ENCODE measurements at regions of chr4 and their contacts with region 1.

Region 1: DNA sequence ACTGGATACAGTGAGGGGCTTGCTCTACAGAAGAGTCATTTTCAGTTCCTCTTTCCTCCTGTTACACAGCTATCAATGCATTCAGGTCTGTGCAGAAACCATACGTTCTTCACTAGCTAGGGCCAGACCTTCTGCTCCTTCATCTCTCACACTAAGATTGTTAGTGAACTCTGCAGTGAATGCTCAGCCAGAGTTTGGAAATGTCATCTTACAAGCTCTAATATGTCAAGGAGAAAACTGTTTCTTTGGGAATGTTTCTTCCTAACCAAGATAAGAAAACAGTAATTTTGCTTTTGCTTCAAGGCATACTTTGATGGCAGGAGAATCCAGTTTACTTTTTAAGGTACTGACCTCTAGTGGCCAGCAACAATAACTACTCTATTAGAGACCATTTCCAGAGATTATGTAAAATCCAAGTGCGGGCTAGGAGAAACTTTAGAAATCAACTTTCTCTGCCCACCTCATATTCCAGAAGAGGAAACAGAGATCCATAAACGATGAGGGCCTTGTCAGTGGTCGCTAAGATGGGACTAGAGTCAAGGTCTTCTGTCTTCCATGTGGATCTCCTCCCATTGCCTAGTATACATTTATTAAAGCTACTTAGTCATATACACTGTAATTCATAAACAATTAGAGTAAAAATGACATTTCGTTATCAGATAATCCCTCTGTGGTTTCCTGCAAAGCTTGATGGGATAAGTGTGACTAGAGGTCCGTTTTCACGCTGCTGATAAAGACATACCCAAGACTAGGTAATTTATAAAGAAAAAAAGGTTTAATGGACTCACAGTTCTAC is 12.1 kb upstream of the CC2D2A start:
- DNase-seq: peak in 1 of 2 experiments; percentile 14
- H3K4me3 ChIP-seq: no peak overlapping the region
- H3K4me3 Mint-ChIP-seq: no peak overlapping the region
- H3K27ac Mint-ChIP-seq: no peak overlapping the region
- H3K4me1 ChIP-seq: no peaks in the 10 kb centered on the region; the same call in 1 of the 2 replicates
- H3K4me1 Mint-ChIP-seq: no peaks in the 10 kb centered on the region
- H3K27me3 ChIP-seq: no peaks in the 10 kb centered on the region; the same call in 1 of the 2 replicates
- H3K27me3 Mint-ChIP-seq: peaks cover 9% of the 10 kb centered on the region
- CTCF ChIP-seq: peak in 1 of 2 experiments; percentile 64

Region 2: DNA sequence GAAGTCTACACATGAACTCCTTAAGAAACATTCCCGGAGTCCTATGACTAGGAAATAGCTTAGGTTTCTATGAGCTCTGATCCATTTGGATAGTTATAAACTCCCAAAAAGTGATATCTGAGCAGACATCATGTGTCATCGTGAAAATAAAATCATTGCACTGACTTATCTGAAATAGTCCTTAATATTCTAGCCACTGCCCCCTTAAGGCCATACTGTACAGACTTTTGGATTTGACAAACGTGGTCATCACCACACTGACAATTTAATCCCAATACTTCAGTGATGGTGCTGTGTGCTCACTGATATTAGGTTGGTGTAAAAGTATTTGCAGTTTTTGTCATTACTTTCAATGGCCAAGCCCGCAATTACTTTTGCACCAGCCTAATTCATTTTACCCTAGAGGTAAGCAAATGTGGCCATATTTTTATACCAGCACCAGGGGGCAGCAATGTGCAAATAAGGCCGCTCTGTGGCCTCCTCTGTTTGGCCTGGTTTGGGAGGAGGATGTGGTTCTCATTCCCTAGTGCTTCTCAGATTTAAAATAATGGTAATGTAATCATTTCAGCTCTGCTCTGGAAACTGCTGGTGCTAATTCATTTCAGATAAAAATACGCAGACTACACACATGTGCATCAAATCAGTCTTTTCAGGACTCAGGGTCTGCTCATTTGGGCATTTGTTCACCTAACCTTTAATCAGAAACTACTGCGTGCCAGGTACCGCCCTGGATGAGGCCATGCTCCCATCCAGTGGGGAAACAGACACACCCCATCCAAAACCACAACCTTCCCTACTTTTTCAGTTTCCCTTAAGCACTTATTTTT is 226.1 kb before region 1 on chr4:
- CTCF ChIA-PET with region 1: no interaction called
- POLR2A ChIA-PET with region 1: no interaction called
- intact Hi-C with region 1: loop called (anchors 1 kb)
- DNase-seq: peak; percentile 67 to 74
- H3K4me3 ChIP-seq: no peak overlapping the region
- H3K4me3 Mint-ChIP-seq: no peak overlapping the region
- H3K27ac Mint-ChIP-seq: no peak overlapping the region
- H3K4me1 ChIP-seq: no peaks in the 10 kb centered on the region
- H3K4me1 Mint-ChIP-seq: no peaks in the 10 kb centered on the region
- H3K27me3 ChIP-seq: no peaks in the 10 kb centered on the region
- H3K27me3 Mint-ChIP-seq: peaks cover 5% of the 10 kb centered on the region
- CTCF ChIP-seq: peak; percentile 46 to 52

Region 3: DNA sequence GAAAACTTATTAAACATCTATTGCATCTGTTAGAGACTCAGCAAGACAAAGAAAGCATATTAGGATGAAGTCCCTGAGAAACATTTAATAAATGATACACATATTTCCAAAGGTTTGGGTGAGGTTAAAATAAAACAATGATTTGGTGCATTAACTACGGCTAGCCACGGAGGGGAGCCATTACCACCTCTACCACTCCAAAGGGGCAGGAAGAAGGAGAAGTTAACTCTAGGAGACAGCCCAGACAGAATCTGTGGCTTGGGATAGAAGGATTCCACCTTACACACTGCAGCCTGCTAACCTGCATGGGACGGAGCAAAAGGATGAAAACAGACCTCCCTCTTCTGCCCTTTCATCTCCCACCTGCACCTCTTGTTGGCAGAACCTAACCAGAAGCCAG is 218.9 kb before region 1 on chr4:
- CTCF ChIA-PET with region 1: no interaction called
- POLR2A ChIA-PET with region 1: no interaction called
- intact Hi-C with region 1: loop called (anchors 1 kb)
- DNase-seq: peak in 1 of 2 experiments; percentile 34
- H3K4me3 ChIP-seq: no peak overlapping the region
- H3K4me3 Mint-ChIP-seq: no peak overlapping the region
- H3K27ac Mint-ChIP-seq: no peak overlapping the region
- H3K4me1 ChIP-seq: no peaks in the 10 kb centered on the region
- H3K4me1 Mint-ChIP-seq: peaks cover 6% of the 10 kb centered on the region
- H3K27me3 ChIP-seq: no peaks in the 10 kb centered on the region
- H3K27me3 Mint-ChIP-seq: peaks cover 9% of the 10 kb centered on the region
- CTCF ChIP-seq: peak; percentile 32 to 34

Region 4: DNA sequence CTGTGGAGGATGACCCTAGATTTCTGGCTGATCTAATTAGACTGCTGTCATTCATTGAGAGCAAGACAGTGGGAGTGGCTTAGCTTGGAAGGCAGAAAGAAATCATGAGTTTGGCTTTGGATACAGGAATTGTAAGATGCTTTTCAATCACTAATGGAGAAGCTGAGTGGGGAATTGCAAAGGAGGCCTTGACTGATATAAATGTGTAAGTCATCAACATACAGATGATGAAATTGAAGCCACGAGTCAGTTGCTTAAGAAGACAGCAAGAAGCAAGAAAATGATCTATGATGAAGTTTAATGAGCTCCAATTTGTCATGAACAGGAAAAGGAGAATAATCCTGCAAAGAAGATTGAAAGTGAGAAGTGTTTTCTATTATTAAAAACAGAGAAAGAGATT is 166.5 kb before region 1 on chr4:
- CTCF ChIA-PET with region 1: no interaction called
- POLR2A ChIA-PET with region 1: no interaction called
- intact Hi-C with region 1: no loop called
- DNase-seq: no peak
- H3K4me3 ChIP-seq: no peak overlapping the region
- H3K4me3 Mint-ChIP-seq: no peak overlapping the region
- H3K27ac Mint-ChIP-seq: no peak overlapping the region
- H3K4me1 ChIP-seq: no peaks in the 10 kb centered on the region
- H3K4me1 Mint-ChIP-seq: no peaks in the 10 kb centered on the region
- H3K27me3 ChIP-seq: no peaks in the 10 kb centered on the region
- H3K27me3 Mint-ChIP-seq: no peaks in the 10 kb centered on the region
- CTCF ChIP-seq: no peak

Region 5: DNA sequence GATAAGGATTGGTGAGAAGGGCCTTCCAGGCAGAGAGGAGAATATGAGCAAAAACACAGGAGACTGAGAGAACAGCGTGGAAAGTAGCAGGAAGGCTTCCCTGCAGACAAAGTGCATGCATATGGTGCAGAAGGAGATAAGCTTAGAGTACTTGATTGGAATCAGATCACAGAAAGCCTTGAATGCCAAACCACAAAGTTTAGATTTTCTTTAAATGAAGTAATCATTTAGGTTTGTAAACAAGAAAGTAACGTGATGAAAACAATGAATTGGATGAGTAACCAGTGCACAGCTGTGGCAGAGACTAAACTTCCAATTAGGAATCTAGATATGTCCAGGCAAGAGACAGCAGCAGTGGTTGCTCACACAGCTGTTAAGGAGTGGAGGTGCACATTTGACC is 113.6 kb before region 1 on chr4:
- CTCF ChIA-PET with region 1: no interaction called
- POLR2A ChIA-PET with region 1: no interaction called
- intact Hi-C with region 1: loop called (anchors 10 kb)
- DNase-seq: no peak
- H3K4me3 ChIP-seq: no peak overlapping the region
- H3K4me3 Mint-ChIP-seq: no peak overlapping the region
- H3K27ac Mint-ChIP-seq: no peak overlapping the region
- H3K4me1 ChIP-seq: peaks cover 18% of the 10 kb centered on the region
- H3K4me1 Mint-ChIP-seq: peaks cover 10% of the 10 kb centered on the region
- H3K27me3 ChIP-seq: no peaks in the 10 kb centered on the region
- H3K27me3 Mint-ChIP-seq: peaks cover 4% of the 10 kb centered on the region
- CTCF ChIP-seq: no peak

Region 6: DNA sequence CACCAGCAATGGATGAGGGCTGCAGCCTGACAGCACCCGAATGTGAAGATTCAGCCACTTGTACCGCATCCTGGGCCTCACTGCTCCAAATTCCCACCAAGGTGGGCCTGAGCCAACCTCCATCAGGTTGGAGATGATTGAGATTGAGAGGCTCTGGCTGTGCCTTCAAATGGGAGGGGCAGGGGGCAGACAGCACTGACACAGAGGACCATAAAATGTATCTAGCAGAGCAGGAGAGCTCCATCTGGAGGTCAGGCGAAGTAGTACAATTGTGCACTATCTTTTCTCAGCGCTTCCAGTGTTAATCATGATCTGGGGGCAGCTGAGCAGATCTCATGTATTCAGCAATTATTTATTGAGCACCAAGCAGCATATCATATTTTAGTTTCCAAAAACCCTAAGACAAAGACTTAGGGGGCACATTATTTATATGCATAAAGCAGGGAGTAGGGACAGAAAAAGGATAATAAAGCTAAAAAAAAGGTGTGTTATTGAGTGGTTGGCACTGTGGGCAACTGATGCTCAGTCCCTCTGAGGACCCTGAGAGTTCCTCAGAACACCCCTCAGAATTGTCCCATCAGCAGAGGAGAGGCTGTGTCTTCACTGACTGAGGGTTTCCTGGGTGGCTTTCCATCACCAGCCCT is 61.3 kb before region 1 on chr4:
- CTCF ChIA-PET with region 1: no interaction called
- POLR2A ChIA-PET with region 1: no interaction called
- intact Hi-C with region 1: loop called (anchors 1 kb)
- DNase-seq: peak; percentile 54 to 62
- H3K4me3 ChIP-seq: no peak overlapping the region
- H3K4me3 Mint-ChIP-seq: no peak overlapping the region
- H3K27ac Mint-ChIP-seq: no peak overlapping the region
- H3K4me1 ChIP-seq: no peaks in the 10 kb centered on the region
- H3K4me1 Mint-ChIP-seq: peaks cover 6% of the 10 kb centered on the region
- H3K27me3 ChIP-seq: no peaks in the 10 kb centered on the region
- H3K27me3 Mint-ChIP-seq: peaks cover 4% of the 10 kb centered on the region
- CTCF ChIP-seq: peak; percentile 68 to 69

Region 7: DNA sequence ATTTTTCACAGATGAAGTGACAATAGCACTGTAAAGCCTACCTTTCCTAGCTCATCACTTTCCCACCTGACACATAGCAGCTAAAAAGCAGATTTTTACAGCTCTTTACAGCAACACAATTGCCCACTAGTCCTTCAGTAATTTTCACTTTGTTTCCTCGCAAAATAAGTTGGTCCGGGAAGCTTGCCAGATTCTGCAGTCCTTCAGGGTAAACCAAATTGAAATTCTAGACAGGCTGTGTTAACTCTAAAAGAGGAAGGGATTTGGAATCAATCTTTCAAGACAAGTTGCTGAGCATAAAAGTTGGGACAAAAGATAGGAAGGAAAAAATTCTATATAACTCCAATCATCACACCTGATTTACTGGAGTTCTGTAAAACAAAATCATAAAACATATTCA is 21.1 kb before region 1 on chr4:
- CTCF ChIA-PET with region 1: no interaction called
- POLR2A ChIA-PET with region 1: no interaction called
- intact Hi-C with region 1: no loop called
- DNase-seq: no peak
- H3K4me3 ChIP-seq: no peak overlapping the region
- H3K4me3 Mint-ChIP-seq: no peak overlapping the region
- H3K27ac Mint-ChIP-seq: no peak overlapping the region
- H3K4me1 ChIP-seq: no peaks in the 10 kb centered on the region
- H3K4me1 Mint-ChIP-seq: no peaks in the 10 kb centered on the region
- H3K27me3 ChIP-seq: no peaks in the 10 kb centered on the region
- H3K27me3 Mint-ChIP-seq: peaks cover 13% of the 10 kb centered on the region
- CTCF ChIP-seq: no peak

Region 8: DNA sequence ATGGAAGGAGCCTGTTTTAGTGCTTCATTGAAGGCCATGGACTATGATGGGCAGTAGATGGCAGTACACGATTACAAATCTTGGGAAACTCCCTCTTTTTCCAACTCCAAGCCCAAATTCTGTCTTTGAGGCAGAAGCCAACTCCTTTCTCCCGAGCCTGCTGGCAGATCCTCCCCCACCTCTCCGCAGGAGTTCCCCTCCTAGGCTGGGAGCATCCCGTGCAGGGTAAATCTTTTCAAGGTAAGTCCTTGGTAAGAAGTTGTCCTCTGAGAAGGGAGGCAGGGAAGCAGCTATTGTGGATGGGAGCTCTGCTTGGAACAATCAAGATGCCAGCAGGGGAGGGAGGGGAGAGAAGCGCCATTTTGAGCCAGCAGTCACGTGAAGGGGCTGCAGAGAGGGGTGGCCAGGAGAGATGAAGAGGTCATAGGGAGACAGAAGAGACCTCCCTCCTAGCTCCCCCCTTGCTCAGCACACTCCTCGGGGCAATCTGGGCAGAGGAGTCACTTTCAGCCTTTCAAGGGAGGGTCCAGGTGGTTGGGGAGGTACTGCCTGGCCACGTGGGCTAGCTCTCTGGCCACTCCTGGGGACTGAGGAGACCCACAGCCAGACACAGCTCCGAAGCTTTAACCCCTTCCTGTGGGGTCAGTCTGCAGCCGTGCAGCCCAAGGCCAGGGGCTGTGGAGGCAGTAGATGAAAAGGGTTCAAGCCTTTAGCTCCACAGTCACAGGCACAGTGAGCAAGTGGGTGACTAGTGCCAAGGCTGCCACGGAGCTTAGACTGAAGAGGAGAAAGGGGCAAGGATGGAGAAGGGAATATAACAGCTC is 21.7 kb after region 1 on chr4:
- CTCF ChIA-PET with region 1: no interaction called
- POLR2A ChIA-PET with region 1: no interaction called
- intact Hi-C with region 1: no loop called
- DNase-seq: peak; percentile 81 to 82
- H3K4me3 ChIP-seq: peak overlapping the region; percentile 37
- H3K4me3 Mint-ChIP-seq: peak overlapping the region; percentile 97
- H3K27ac Mint-ChIP-seq: peak overlapping the region; percentile 96
- H3K4me1 ChIP-seq: no peaks in the 10 kb centered on the region
- H3K4me1 Mint-ChIP-seq: peaks cover 7% of the 10 kb centered on the region
- H3K27me3 ChIP-seq: no peaks in the 10 kb centered on the region
- H3K27me3 Mint-ChIP-seq: no peaks in the 10 kb centered on the region
- CTCF ChIP-seq: peak; percentile 50 to 60

Region 9: DNA sequence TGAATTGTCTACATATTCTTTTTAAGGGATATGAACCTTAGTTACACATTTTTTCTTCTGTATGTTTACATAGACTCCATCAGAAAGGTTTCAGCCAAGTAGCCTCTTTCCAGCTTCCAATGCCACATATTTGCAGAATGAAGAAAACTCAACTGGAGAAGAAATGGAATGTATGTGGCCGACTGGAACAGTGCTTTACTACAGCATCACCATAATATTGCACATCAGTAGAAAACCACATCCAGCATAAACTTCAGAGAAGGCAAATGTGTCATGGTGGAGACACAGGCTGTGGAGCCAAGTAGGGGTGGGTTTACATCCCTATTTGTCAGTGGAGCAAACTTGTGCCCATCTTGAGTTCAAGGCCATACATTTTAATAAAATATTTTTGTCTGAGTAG is 1645.6 kb after region 1 on chr4:
- CTCF ChIA-PET with region 1: no interaction called
- POLR2A ChIA-PET with region 1: no interaction called
- intact Hi-C with region 1: no loop called
- DNase-seq: no peak
- H3K4me3 ChIP-seq: no peak overlapping the region
- H3K4me3 Mint-ChIP-seq: no peak overlapping the region
- H3K27ac Mint-ChIP-seq: no peak overlapping the region
- H3K4me1 ChIP-seq: no peaks in the 10 kb centered on the region
- H3K4me1 Mint-ChIP-seq: no peaks in the 10 kb centered on the region
- H3K27me3 ChIP-seq: no peaks in the 10 kb centered on the region
- H3K27me3 Mint-ChIP-seq: no peaks in the 10 kb centered on the region
- CTCF ChIP-seq: no peak

Measured in Caco-2 (cell line).